Activated CD4-positive, alpha-beta T cell treated with anti-CD3 and anti-CD28 coated beads, Interleukin-2, amount 10 ng/mL, durations not matched to agents 24 days and 14 days (primary cell): ENCODE measurements at regions of chr11 and their contacts with region 1.

Region 1: GRCh38 chr11:78188286-78189173 is at the starts of genes KCTD21 and USP35:
- DNase-seq: peak; percentile 98
- H3K4me3 Mint-ChIP-seq: peak within 1 kb of the TSS; percentile 99
- H3K27ac Mint-ChIP-seq: peak within 1 kb of the TSS; percentile 99
- H3K4me1 Mint-ChIP-seq: peaks cover 53% of the 10 kb centered on the region
- H3K27me3 Mint-ChIP-seq: no peaks in the 10 kb centered on the region
- total RNA-seq, gene KCTD21: 11.7 and 12.0 TPM in 2 replicates
- total RNA-seq, gene USP35: 10.4 and 13.1 TPM in 2 replicates

Region 2: DNA sequence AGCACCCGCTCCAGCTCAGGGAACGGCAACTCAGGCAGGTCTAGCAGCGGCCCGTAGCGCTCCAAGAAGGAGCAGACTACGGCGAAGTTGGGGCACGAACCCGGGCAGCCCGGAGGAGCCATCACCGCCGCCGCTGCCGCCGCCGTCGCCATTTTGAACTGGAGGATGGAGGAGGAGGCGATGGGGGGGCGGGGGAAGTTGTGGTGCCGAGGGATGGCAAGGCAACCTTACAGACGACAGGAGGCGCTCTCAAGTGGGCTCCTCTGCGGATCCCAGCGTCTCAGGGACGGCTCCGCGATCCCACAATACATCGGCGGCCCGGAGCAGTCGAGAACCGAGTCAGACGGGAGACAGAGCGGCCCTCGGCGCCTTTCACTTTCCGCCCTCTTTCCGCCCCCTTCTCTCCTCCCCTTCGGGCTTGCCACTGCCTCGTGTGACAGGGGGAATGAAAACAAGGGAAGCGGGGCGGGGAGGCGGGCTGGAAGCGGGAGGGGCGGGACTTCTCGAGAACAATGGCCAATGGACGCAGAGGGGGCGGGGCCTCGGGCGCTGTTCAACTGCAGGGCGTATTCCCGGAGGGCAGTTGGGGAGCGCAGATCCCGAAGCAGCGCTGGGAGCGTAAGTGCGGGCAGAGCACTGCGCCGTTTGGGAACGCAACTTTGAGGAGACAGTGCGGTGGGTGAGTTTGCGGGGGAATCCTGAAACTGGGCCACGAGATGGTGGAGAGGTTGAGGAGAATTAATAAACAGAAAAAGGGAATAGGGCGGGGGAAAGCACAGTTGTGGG is 367.8 kb before region 1 on chr11 and contains the starts of genes AAMDC and RSF1:
- intact Hi-C with region 1: loop called (anchors 2 kb)
- DNase-seq: peak; percentile 98
- H3K4me3 Mint-ChIP-seq: peak within 1 kb of the TSS; percentile 98
- H3K27ac Mint-ChIP-seq: peak within 1 kb of the TSS; percentile 92
- H3K4me1 Mint-ChIP-seq: peaks cover 29% of the 10 kb centered on the region
- H3K27me3 Mint-ChIP-seq: no peaks in the 10 kb centered on the region
- total RNA-seq, gene AAMDC: 1.3 and 1.4 TPM in 2 replicates
- total RNA-seq, gene RSF1: 45.3 and 47.6 TPM in 2 replicates

Region 3: GRCh38 chr11:78094250-78094649 is 94.3 kb before region 1 on chr11:
- intact Hi-C with region 1: loop called (anchors 2 kb)
- DNase-seq: peak; percentile 75
- H3K4me3 Mint-ChIP-seq: peak overlapping the region; percentile 12
- H3K27ac Mint-ChIP-seq: peak overlapping the region; percentile 87
- H3K4me1 Mint-ChIP-seq: peaks cover 10% of the 10 kb centered on the region
- H3K27me3 Mint-ChIP-seq: no peaks in the 10 kb centered on the region

Region 4: DNA sequence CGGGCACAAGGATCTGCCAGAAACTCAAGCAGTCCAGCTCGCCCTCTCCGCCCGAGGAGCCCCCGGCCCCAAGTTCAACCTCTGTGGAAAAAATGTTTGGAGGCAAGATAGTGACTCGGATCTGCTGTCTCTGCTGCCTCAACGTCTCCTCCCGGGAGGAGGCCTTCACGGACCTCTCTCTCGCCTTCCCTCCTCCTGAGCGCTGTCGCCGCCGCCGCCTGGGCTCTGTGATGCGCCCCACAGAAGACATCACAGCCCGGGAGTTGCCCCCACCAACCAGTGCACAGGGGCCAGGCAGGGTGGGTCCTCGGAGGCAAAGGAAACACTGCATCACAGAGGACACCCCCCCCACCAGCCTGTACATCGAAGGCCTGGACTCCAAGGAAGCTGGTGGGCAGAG is 20.9 kb after region 1 on chr11:
- intact Hi-C with region 1: no loop called
- DNase-seq: no peak
- H3K4me3 Mint-ChIP-seq: no peak overlapping the region
- H3K27ac Mint-ChIP-seq: no peak overlapping the region
- H3K4me1 Mint-ChIP-seq: peaks cover 15% of the 10 kb centered on the region
- H3K27me3 Mint-ChIP-seq: no peaks in the 10 kb centered on the region

Region 5: DNA sequence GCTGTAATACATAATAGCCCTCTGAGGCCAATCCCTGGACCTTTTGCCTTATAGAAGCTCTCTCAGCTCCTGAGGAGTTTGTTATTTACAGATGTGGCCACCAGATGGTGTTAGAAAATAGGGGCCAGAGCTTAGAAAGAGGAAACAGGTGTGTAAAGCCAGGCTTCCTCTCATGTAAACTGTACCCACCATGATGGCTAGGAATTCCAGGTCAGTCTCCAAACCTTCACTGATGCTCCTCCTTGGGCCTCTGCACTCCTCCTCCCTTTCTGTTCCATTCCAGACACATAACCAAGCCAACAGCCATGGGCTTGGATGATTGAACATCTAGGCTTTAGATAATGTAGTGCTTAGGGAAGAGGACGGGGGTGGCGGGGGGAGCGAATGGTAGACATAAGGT is 39.9 kb after region 1 on chr11:
- intact Hi-C with region 1: loop called (anchors 1 kb)
- DNase-seq: peak; percentile 83
- H3K4me3 Mint-ChIP-seq: no peak overlapping the region
- H3K27ac Mint-ChIP-seq: peak overlapping the region; percentile 31
- H3K4me1 Mint-ChIP-seq: peaks cover 59% of the 10 kb centered on the region
- H3K27me3 Mint-ChIP-seq: no peaks in the 10 kb centered on the region

Region 6: DNA sequence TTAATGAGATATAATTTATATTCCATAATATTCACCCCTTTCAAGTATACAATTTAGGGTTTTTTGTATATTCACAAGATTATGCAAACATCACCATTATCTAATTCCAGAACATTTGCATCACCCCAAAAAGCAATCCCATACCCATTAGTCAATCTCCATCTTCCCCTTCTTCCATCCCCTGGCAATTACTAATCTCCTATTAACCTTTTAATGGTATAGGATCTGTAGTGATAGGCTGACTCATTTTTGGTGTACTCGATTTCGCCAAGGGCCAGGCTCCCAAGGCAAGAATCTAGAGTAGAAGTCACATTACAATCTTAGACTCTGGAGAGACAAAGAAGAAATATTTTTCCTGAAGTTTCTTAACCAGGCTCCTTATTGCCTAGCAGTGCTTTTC is 115.7 kb after region 1 on chr11:
- intact Hi-C with region 1: no loop called
- DNase-seq: no peak
- H3K4me3 Mint-ChIP-seq: no peak overlapping the region
- H3K27ac Mint-ChIP-seq: no peak overlapping the region
- H3K4me1 Mint-ChIP-seq: peaks cover 22% of the 10 kb centered on the region
- H3K27me3 Mint-ChIP-seq: peaks cover 2% of the 10 kb centered on the region

Region 7: GRCh38 chr11:78416305-78417178 is 228.0 kb after region 1 on chr11:
- intact Hi-C with region 1: loop called (anchors 1 kb)
- DNase-seq: peak; percentile 95
- H3K4me3 Mint-ChIP-seq: peak overlapping the region; percentile 98
- H3K27ac Mint-ChIP-seq: peak overlapping the region; percentile 95
- H3K4me1 Mint-ChIP-seq: peaks cover 57% of the 10 kb centered on the region
- H3K27me3 Mint-ChIP-seq: peaks cover 11% of the 10 kb centered on the region